Spleen (tissue), 13 donors: ENCODE measurements at regions of chr2 and their contacts with region 1.

Region 1: DNA sequence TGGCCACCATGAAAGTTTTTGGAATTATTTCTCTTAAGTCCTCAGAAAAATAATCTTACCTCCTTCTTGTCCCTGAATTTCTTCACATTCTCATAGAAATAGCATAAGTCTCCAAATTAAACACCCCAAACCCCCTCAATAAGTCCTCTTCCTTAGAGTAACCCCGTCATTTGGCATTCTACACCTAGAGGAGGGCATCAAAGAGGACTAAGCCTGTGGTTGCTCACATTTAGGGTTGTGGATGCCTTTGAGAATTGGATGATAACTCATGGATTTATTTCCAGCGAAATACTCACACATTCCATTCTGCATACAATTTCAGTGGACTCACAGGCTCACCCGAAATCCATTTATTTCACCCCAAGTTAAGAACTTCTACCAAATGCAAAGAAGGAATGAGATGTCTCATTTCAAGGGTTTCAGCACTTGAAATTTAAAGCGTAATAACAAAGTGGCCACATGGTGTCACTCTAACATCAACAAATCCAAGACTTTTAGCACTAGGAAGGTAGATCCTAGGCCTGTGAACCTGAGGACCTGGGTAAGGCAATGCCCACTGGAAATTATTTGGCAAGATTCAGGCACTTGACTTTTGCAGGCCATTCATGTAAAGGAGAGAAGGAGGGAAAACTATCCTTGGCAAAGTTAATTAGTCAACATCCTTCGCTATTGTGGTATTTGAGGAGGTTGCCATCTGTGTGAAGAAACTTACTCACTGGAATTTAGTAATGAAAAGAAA is 24.6 kb downstream of the DYTN start:
- DNase-seq: no peak
- H3K4me3 ChIP-seq: no peak overlapping the region
- H3K27ac ChIP-seq: no peak overlapping the region
- H3K4me1 ChIP-seq: no peaks in the 10 kb centered on the region
- H3K27me3 ChIP-seq: peaks cover 0 to 2% (median 0%) of the 10 kb centered on the region in 7 donors
- CTCF ChIP-seq: peak in 10 of 11 experiments; percentile 40 to 67 (median 61)
- POLR2A ChIP-seq: no peak

Region 2: GRCh38 chr2:206408323-206409320 is 284.9 kb before region 1 on chr2:
- intact Hi-C with region 1: no loop called
- DNase-seq: no peak
- H3K4me3 ChIP-seq: no peak overlapping the region
- H3K27ac ChIP-seq: no peak overlapping the region
- H3K4me1 ChIP-seq: no peaks in the 10 kb centered on the region
- H3K27me3 ChIP-seq: no peaks in the 10 kb centered on the region
- CTCF ChIP-seq: no peak
- POLR2A ChIP-seq: no peak

Region 3: DNA sequence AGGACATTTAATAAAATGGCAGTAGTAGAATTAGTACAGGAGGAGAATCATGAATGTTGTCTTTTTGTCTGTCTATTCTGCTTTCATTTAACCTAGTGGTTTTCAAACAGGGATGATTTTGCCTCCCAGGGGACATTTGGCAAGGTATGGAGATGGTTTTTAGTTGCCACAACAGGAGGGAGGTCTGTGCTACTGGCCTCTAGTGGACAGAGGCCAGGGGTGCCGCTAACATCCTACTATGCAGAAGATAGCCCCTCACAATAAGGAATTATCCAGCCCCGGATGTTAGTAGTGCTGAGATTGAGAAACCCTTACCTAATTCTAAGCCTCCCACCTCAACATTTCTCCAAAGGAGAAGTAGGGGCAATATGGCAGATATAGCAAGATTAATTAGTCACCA is 90.2 kb after region 1 on chr2:
- intact Hi-C with region 1: loop called (anchors 10 kb)
- DNase-seq: no peak
- H3K4me3 ChIP-seq: no peak overlapping the region
- H3K27ac ChIP-seq: no peak overlapping the region
- H3K4me1 ChIP-seq: no peaks in the 10 kb centered on the region
- H3K27me3 ChIP-seq: no peaks in the 10 kb centered on the region
- CTCF ChIP-seq: no peak
- POLR2A ChIP-seq: no peak

Region 4: DNA sequence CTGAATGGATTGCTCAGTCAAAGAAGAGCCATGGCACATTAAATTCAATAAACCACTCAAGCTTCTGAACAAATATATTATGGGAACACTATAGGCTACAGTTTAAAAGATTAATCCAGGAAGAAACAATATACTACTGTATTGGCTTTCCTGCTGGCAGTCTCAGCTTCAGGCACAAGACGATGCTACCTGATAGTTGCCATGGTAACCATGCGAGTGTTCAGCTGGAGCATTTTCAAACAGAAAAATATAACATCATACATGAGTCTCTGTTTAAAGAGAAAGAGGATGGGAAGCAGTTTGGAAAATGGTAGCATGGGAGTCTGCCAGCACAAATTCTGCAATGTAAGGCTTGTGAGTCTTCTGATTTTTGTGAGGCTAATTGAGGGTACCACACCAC is 179.9 kb after region 1 on chr2:
- intact Hi-C with region 1: no loop called
- DNase-seq: no peak
- H3K4me3 ChIP-seq: no peak overlapping the region
- H3K27ac ChIP-seq: no peak overlapping the region
- H3K4me1 ChIP-seq: no peaks in the 10 kb centered on the region
- H3K27me3 ChIP-seq: no peaks in the 10 kb centered on the region
- CTCF ChIP-seq: no peak
- POLR2A ChIP-seq: no peak

Region 5: DNA sequence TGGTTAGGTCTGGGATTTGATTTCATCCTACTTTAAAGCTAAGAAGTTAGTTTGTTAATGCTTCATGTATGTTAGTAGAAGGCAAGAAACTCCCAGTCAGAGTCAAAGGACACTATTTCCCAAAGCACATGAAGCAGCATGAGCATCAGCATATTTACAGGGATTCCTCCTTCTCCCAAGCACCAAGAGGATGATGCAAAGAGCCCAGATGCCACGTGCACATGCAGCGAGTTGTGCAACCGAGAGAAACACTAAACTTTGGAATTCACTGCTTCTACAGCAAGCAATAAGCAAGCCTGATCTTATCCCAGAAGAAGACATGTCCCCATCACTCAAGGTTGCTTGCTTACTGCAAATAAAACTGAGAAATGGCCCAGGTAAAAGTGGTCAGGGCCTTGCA is 278.2 kb after region 1 on chr2:
- intact Hi-C with region 1: loop called (anchors 10 kb)
- DNase-seq: no peak
- H3K4me3 ChIP-seq: no peak overlapping the region
- H3K27ac ChIP-seq: no peak overlapping the region
- H3K4me1 ChIP-seq: no peaks in the 10 kb centered on the region
- H3K27me3 ChIP-seq: no peaks in the 10 kb centered on the region
- CTCF ChIP-seq: no peak
- POLR2A ChIP-seq: no peak